Activated naive CD4-positive, alpha-beta T cell treated with anti-CD3 and anti-CD28 coated beads for 36 hours (primary cell): ENCODE measurements at regions of chr13 and their contacts with region 1.

Region 1: DNA sequence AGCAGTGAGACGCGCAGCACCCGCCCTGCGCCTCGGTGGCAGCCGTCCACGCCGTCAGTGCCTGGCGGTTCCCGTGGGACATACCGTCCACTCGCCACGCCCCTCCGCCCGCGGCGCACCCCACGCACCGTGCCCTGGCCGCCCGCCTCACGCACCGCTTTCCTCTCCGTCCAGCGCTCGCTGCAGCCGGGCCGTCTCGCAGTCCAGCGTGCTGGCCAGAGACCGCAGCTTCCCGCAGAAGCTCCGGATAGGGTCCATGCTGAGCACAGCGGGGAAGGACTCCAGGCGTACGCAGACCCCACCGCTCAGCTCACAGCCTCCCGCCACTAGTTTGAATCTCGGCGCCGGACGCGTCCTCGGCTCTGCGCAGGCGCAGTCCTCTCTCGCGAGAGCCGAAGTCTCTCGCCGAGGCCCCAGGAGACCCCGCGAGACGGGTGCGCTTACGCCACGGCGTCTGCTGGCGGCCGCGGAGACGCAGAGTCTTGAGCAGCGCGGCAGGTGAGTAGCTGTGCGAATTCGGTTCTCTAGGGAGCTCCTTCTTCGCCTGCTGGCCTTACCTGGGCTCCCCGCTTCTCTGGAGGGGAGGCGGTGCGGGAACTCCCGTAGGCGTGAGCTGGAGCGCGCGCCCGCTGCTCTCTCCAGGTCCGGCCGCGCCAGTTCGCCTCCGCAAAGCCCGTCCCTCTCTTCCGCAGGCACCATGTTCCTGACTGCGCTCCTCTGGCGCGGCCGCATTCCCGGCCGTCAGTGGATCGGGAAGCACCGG is at the starts of genes MRPL57 and SKA3:
- DNase-seq: peak; percentile 92
- H3K4me3 Mint-ChIP-seq: peak within 1 kb of the TSS; percentile 99
- H3K27ac Mint-ChIP-seq: peak within 1 kb of the TSS; percentile 97
- H3K4me1 Mint-ChIP-seq: peaks cover 24% of the 10 kb centered on the region
- H3K27me3 Mint-ChIP-seq: no peaks in the 10 kb centered on the region
- total RNA-seq, gene MRPL57: 19.0 to 21.0 TPM
- total RNA-seq, gene SKA3: 32.8 to 33.8 TPM

Region 2: DNA sequence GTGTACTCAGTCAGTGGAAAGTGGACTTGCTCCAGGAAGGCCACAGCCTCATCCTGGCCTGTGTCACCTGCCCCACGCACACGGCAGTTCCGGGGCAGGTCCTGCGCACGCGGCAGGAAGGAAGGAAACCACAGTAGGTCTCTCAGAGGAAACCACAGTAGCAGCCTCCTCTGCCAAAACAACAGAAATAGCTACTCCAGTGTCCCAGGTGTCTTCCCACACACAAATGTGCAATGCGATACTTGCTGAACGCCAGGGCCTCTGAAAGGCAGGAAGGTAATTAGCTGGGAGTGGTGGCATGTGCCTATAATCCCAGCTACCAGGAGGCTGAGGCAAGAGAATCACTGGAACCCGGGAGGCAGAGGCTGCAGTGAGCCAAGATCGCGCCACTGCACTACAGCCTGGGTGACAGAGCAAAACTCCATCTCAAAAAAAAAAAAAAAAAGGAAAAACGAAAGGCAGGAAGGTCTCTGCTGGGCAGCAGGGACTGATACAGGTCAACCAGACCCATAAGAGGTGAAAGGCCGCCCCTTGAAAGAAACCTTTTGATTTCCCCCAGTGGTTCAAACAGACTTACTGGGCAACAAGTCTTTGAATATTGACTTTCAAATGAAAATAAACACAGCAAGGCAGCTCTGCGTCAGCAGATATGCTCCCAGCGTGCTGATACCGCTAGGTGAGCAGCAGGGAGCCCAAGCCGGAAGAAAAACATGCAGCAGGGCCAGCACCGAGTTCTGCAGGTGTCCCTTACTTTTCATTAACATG is 700.3 kb before region 1 on chr13:
- CTCF ChIA-PET with region 1: no interaction called
- intact Hi-C with region 1: loop called (anchors 5 kb)
- DNase-seq: peak; percentile 82
- H3K4me3 Mint-ChIP-seq: peak overlapping the region; percentile 65
- H3K27ac Mint-ChIP-seq: peak overlapping the region; percentile 92
- H3K4me1 Mint-ChIP-seq: peaks cover 27% of the 10 kb centered on the region
- H3K27me3 Mint-ChIP-seq: no peaks in the 10 kb centered on the region

Region 3: DNA sequence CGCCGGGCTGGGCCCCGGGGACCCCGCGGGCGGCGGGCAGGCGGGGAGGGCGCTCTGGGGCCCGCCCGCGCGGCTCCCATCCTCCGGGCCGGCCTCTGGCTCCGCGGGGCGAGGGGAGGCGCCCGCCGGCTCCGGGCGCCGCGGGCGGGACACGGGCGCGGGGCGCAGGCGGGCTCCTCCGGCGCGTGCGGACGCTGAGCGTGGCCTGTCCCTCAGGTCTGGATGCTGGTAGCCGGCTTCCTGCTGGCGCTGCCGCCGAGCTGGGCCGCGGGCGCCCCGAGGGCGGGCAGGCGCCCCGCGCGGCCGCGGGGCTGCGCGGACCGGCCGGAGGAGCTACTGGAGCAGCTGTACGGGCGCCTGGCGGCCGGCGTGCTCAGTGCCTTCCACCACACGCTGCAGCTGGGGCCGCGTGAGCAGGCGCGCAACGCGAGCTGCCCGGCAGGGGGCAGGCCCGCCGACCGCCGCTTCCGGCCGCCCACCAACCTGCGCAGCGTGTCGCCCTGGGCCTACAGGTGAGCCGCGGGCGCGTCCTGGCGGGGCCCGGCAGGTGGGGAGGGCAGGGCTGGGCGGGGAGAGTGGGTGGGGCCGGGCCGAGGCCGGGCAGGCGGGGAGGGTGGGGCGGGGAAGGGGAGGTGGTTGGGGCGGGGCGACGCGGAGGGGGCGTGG is 472.5 kb before region 1 on chr13:
- CTCF ChIA-PET with region 1: no interaction called
- intact Hi-C with region 1: loop called (anchors 5 kb)
- DNase-seq: peak; percentile 72
- H3K4me3 Mint-ChIP-seq: no peak overlapping the region
- H3K27ac Mint-ChIP-seq: no peak overlapping the region
- H3K4me1 Mint-ChIP-seq: peaks cover 5% of the 10 kb centered on the region
- H3K27me3 Mint-ChIP-seq: peaks cover 13% of the 10 kb centered on the region

Region 4: GRCh38 chr13:20945952-20946383 is 230.4 kb before region 1 on chr13:
- CTCF ChIA-PET with region 1: interaction called, 16 read pairs
- intact Hi-C with region 1: loop called (anchors 1 kb)
- DNase-seq: peak; percentile 9
- H3K4me3 Mint-ChIP-seq: peak overlapping the region; percentile 21
- H3K27ac Mint-ChIP-seq: no peak overlapping the region
- H3K4me1 Mint-ChIP-seq: peaks cover 10% of the 10 kb centered on the region
- H3K27me3 Mint-ChIP-seq: peaks cover 44% of the 10 kb centered on the region

Region 5: GRCh38 chr13:21115231-21115630 is 61.2 kb before region 1 on chr13:
- CTCF ChIA-PET with region 1: interaction called, 11 read pairs
- intact Hi-C with region 1: loop called (anchors 1 kb)
- DNase-seq: no peak
- H3K4me3 Mint-ChIP-seq: no peak overlapping the region
- H3K27ac Mint-ChIP-seq: no peak overlapping the region
- H3K4me1 Mint-ChIP-seq: no peaks in the 10 kb centered on the region
- H3K27me3 Mint-ChIP-seq: no peaks in the 10 kb centered on the region

Region 6: DNA sequence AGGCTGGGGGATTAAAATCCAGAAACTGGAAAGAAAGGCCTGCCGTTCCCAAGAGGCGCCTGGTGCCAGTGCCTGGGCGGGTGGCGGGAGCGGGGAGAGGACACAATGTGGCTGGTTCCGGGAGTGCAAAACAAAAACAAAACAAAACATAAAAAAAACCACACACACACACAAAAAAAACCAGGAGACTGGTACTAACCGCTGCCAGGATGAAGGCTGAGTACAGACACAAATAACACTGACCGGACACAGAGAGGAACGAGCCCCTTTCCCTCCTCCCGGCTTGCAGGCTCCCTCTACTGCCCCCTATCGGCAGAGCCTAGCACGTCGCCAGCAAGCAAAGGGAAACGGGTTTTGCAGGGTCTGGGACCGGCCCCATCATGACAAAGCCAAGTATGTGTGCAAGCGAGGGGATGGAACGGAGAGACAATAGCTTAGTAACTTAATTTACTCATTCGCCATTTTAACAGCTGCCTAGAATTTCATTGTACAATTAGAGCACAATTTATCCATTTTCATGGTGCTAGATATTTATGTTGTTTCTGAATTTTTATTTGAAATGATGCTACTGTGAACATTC is 300.6 kb after region 1 on chr13:
- CTCF ChIA-PET with region 1: interaction called, 10 read pairs
- intact Hi-C with region 1: loop called (anchors 2 kb)
- DNase-seq: peak; percentile 91
- H3K4me3 Mint-ChIP-seq: peak overlapping the region; percentile 73
- H3K27ac Mint-ChIP-seq: peak overlapping the region; percentile 10
- H3K4me1 Mint-ChIP-seq: peaks cover 8% of the 10 kb centered on the region
- H3K27me3 Mint-ChIP-seq: no peaks in the 10 kb centered on the region